ENCODE measurements at regions of chr10 and their contacts with region 1.

Region 1: DNA sequence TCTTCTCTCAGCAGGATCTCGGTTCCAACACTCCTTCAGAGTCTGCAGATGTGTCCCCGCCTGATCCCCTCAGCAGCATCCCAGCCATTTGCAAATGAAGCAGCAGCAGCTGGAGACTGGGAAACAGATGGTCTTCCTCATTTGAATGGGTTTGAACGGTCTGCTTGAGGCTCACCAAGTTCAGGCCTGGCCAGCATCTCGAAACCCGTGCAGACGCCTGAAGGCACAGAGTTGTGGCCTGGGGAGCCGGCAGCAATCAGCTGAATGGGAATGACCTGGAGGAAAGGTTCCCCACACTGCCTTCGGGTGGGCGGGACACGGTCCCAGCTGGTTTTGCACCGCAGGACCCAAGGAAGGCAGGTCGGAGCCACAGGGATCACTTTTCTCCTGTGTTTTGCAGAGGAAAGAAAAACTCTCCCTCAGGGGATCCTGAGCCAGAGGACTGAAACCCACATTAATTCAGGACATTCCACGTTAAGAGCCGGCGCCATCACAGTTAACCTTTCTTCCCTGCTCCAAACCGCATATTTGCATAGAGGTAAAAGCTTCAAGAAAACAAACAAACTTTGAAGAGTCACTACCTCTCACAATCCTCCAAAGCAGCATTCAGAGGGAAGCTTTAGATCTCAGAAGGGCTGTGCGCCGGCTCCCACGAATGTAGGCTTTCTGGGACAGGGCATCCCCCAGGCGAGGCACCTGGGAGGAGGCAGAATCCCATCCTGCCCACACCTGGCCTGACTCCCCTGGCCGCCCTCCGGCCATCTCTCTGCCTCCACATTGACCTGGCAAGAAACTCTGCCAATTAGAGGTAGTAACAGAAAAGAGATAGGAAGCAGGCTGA is 17.7 kb downstream of the FGFR2 start:
- DNase-seq: peak; percentile 72 to 79
- H3K4me3 ChIP-seq: peak overlapping the region in 3 of 4 experiments; percentile 14 to 46 (median 23); a peak in 7 of 8 replicates
- H3K27ac ChIP-seq: peak overlapping the region; percentile 69
- H3K4me1 ChIP-seq: peaks cover 36 to 55% (median 43%) of the 10 kb centered on the region in 4 experiments
- H3K27me3 ChIP-seq: no peaks in the 10 kb centered on the region
- CTCF ChIP-seq: no peak
- EP300 ChIP-seq: peak in 1 of 2 experiments; percentile 87; a peak in 1 of 3 replicates
- POLR2A ChIP-seq: peak in 1 of 2 experiments; percentile 54; a peak in 2 of 3 replicates
- RAD21 ChIP-seq: peak in 1 of 2 experiments; percentile 0; a peak in 2 of 4 replicates

Region 2: GRCh38 chr10:121592166-121592890 is 11.8 kb after region 1 on chr10:
- CTCF ChIA-PET with region 1: interaction called, 17 read pairs
- POLR2A ChIA-PET with region 1: interaction called, 42 read pairs
- DNase-seq: no peak
- H3K4me3 ChIP-seq: peak overlapping the region in 2 of 4 experiments; percentile 2 to 4; a peak in 1 of 8 replicates
- H3K27ac ChIP-seq: no peak overlapping the region
- H3K4me1 ChIP-seq: peaks cover 9 to 43% (median 25%) of the 10 kb centered on the region in 4 experiments
- H3K27me3 ChIP-seq: no peaks in the 10 kb centered on the region
- CTCF ChIP-seq: peak in 2 of 3 experiments; percentile 8 to 46; a peak in 2 of 4 replicates
- EP300 ChIP-seq: no peak
- POLR2A ChIP-seq: no peak
- RAD21 ChIP-seq: peak; percentile 12 to 13; a peak in 1 of 4 replicates

Region 3: GRCh38 chr10:121598207-121598862 is 17.8 kb after region 1 on chr10 and contains the start of gene FGFR2:
- CTCF ChIA-PET with region 1: interaction called, 17 read pairs
- POLR2A ChIA-PET with region 1: interaction called, 42 read pairs
- DNase-seq: peak in 1 of 2 experiments; percentile 90
- H3K4me3 ChIP-seq: peak within 1 kb of the TSS; percentile 95 to 100 (median 97)
- H3K27ac ChIP-seq: peak within 1 kb of the TSS; percentile 92
- H3K4me1 ChIP-seq: peaks cover 14 to 35% (median 19%) of the 10 kb centered on the region in 4 experiments
- H3K27me3 ChIP-seq: peaks cover 0 to 3% (median 0%) of the 10 kb centered on the region in 4 experiments; a peak in 1 of 7 replicates
- CTCF ChIP-seq: no peak
- EP300 ChIP-seq: peak in 1 of 2 experiments; percentile 76; a peak in 1 of 3 replicates
- POLR2A ChIP-seq: peak; percentile 77 to 85
- RAD21 ChIP-seq: no peak; a peak in 1 of 4 replicates
- total RNA-seq, gene FGFR2: 81.2 and 81.6 TPM in 2 replicates

Measured in H1 (cell line).